Activated T-helper 1 cell treated with anti-CD3 and anti-CD28 coated beads, Interleukin-12 subunit alpha, Interleukin-12 subunit beta, Interleukin-2, Interleukin-4 antibody, amounts not matched to agents 30 ng/mL and 10 ng/mL and 1 ng/mL, durations not matched to agents 14 hours and 24 hours and 36 hours (primary cell): ENCODE measurements at regions of chr3 and their contacts with region 1.

Region 1: GRCh38 chr3:49093853-49094767 is at the start of gene QRICH1:
- DNase-seq: peak; percentile 94
- H3K4me3 Mint-ChIP-seq: peak within 1 kb of the TSS; percentile 97
- H3K27ac Mint-ChIP-seq: peak within 1 kb of the TSS; percentile 98
- H3K4me1 Mint-ChIP-seq: peaks cover 30% of the 10 kb centered on the region
- H3K27me3 Mint-ChIP-seq: no peaks in the 10 kb centered on the region
- total RNA-seq, gene QRICH1: 147 and 150 TPM in 2 replicates

Region 2: DNA sequence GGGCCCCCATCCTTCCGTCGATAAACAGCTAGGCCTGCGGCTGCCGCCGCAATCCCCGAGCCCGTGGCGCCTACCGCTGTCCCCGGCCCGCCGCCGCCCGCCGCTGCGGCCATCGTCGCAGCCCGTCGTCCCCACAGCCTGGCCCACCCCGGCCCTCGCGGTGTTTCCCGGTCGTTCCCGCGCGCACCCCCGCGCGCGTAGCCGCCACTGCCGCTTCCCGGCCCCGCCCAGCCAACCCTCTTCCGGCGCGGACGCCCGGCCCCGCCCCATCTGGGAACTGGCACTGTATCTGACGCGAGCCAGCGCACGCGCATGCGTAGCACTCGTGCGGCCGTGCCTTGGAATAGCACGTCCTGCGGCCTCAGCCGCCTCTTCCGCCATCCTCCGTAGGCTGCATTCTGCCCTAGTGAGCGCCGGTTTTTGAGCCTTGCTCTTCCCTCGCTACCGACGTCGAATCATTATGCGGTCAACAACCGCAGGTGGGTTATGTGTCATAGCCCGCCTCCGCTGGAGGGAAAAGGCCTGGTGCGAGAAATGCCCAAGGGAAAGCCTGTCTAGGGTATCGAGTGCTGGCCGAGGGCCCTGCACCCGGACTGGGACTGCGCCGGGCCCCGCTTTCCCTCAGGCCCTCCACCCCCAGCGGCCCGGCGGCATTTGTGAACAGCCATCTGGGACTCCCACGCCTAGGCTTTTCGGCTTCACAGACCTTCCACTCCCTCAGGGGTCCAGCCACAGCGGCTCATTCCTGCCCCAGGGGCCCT is 1312.2 kb before region 1 on chr3 and contains the start of gene SMARCC1:
- intact Hi-C with region 1: loop called (anchors 5 kb)
- DNase-seq: peak; percentile 98
- H3K4me3 Mint-ChIP-seq: peak within 1 kb of the TSS; percentile 96
- H3K27ac Mint-ChIP-seq: peak within 1 kb of the TSS; percentile 98
- H3K4me1 Mint-ChIP-seq: peaks cover 28% of the 10 kb centered on the region
- H3K27me3 Mint-ChIP-seq: no peaks in the 10 kb centered on the region
- total RNA-seq, gene SMARCC1: 136 and 148 TPM in 2 replicates

Region 3: DNA sequence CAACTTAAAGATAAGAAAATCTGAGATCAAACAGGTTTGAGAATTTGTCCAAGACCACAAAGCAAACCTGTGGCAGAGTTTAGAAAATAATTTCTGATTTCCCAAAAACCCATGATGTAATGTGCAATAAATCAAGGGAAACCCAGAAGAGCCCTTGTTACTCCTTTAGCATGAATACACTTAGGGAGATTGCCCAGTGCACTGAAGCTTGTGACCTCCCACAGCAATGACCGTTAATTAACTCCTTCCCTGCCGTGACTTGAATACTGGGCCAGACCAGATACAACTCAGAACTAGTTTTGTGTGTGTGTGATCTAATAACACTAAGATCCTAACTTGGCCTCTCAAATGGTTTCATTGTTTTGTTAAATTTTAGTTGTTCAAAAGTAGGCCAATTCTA is 248.9 kb before region 1 on chr3:
- intact Hi-C with region 1: no loop called
- DNase-seq: no peak
- H3K4me3 Mint-ChIP-seq: peak overlapping the region; percentile 50
- H3K27ac Mint-ChIP-seq: no peak overlapping the region
- H3K4me1 Mint-ChIP-seq: peaks cover 22% of the 10 kb centered on the region
- H3K27me3 Mint-ChIP-seq: no peaks in the 10 kb centered on the region

Region 4: GRCh38 chr3:48918388-48919214 is 175.5 kb before region 1 on chr3 and contains the start of gene ARIH2:
- intact Hi-C with region 1: loop called (anchors 2 kb)
- DNase-seq: peak; percentile 87
- H3K4me3 Mint-ChIP-seq: peak within 1 kb of the TSS; percentile 92
- H3K27ac Mint-ChIP-seq: peak within 1 kb of the TSS; percentile 97
- H3K4me1 Mint-ChIP-seq: peaks cover 14% of the 10 kb centered on the region
- H3K27me3 Mint-ChIP-seq: no peaks in the 10 kb centered on the region
- total RNA-seq, gene ARIH2: 179 and 180 TPM in 2 replicates

Region 5: GRCh38 chr3:49021813-49022687 is 72.1 kb before region 1 on chr3 and contains the start of gene NDUFAF3:
- intact Hi-C with region 1: loop called (anchors 1 kb)
- DNase-seq: peak; percentile 91
- H3K4me3 Mint-ChIP-seq: peak within 1 kb of the TSS; percentile 91
- H3K27ac Mint-ChIP-seq: peak within 1 kb of the TSS; percentile 99
- H3K4me1 Mint-ChIP-seq: peaks cover 41% of the 10 kb centered on the region
- H3K27me3 Mint-ChIP-seq: no peaks in the 10 kb centered on the region
- total RNA-seq, gene NDUFAF3: 126 and 129 TPM in 2 replicates

Region 6: DNA sequence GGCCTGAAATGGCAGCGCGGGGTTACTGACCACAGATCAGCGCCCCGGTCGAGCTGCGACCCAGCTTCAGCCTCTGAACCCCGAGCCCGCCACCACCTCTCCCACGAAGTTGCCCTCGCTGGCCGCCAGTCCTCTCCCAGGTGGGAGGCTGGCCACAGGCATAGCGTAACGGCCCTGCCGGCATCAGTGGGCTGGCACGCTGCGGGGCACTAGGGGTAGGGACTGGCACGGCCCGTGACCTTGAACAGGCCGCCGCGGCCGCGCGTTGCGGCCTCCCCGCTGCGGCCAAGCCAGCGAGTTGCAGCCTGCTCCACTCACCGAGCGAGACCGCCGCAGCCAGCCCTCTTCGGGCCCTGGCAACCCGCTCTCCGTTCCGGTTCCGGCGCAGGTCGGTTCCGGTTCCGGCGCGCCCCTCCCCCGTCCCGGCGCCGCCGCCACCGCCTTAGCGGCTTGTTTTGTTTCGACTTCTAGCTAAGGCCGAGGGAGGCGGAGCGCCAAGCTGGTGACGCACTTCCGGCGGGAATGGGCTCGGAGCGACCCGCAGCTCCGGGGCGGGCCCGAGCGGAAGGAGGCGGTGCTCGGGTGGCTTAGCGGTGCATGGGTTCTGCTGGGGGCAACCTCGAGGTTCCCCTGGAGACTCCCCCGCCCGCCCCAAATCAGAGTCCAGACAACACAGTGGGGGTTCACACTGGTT is 26.5 kb after region 1 on chr3 and contains the start of gene USP19:
- intact Hi-C with region 1: loop called (anchors 1 kb)
- DNase-seq: peak; percentile 94
- H3K4me3 Mint-ChIP-seq: peak within 1 kb of the TSS; percentile 90
- H3K27ac Mint-ChIP-seq: peak within 1 kb of the TSS; percentile 88
- H3K4me1 Mint-ChIP-seq: peaks cover 10% of the 10 kb centered on the region
- H3K27me3 Mint-ChIP-seq: peaks cover 1% of the 10 kb centered on the region
- total RNA-seq, gene USP19: 57.7 and 59.7 TPM in 2 replicates

Region 7: GRCh38 chr3:49339945-49340800 is 246.1 kb after region 1 on chr3 and contains the start of gene USP4:
- intact Hi-C with region 1: loop called (anchors 1 kb)
- DNase-seq: peak; percentile 93
- H3K4me3 Mint-ChIP-seq: peak within 1 kb of the TSS; percentile 92
- H3K27ac Mint-ChIP-seq: peak within 1 kb of the TSS; percentile 100
- H3K4me1 Mint-ChIP-seq: peaks cover 45% of the 10 kb centered on the region
- H3K27me3 Mint-ChIP-seq: no peaks in the 10 kb centered on the region
- total RNA-seq, gene USP4: 84.4 and 90.2 TPM in 2 replicates

Region 8: GRCh38 chr3:49428697-49429100 is 334.6 kb after region 1 on chr3:
- intact Hi-C with region 1: loop called (anchors 1 kb)
- DNase-seq: no peak
- H3K4me3 Mint-ChIP-seq: peak overlapping the region; percentile 96
- H3K27ac Mint-ChIP-seq: peak overlapping the region; percentile 94
- H3K4me1 Mint-ChIP-seq: peaks cover 23% of the 10 kb centered on the region
- H3K27me3 Mint-ChIP-seq: no peaks in the 10 kb centered on the region